Calu3 (cell line): ENCODE measurements at regions of chr10 and their contacts with region 1.

Region 1: DNA sequence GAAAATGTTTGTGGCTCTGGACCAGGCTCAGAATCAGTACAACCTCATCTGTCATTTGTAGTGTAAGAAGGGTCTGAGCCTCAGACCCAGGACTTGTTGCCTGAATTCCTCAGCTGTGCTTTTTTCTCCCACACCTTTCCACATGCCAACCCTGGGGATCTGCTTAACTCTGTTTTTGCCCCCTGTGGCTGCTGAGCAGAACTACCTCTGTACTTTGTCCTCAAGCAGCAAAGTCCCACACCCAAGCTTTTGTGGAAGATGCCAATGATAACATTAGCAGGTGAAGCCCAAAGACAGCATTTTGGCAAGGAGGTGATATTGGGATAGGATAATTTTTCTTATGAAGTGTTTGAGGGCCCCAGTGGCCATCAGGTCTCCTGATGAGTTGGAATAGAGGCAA is 5.8 kb upstream of the CYP2C18 start:
- DNase-seq: peak; percentile 25
- H3K4me3 Mint-ChIP-seq: no peak overlapping the region
- H3K27ac Mint-ChIP-seq: no peak overlapping the region
- H3K4me1 Mint-ChIP-seq: peaks cover 52% of the 10 kb centered on the region
- H3K27me3 Mint-ChIP-seq: no peaks in the 10 kb centered on the region
- CTCF ChIP-seq: no peak

Region 2: GRCh38 chr10:94076321-94076841 is 601.3 kb before region 1 on chr10:
- CTCF ChIA-PET with region 1: no interaction called
- intact Hi-C with region 1: no loop called
- DNase-seq: no peak
- H3K4me3 Mint-ChIP-seq: no peak overlapping the region
- H3K27ac Mint-ChIP-seq: no peak overlapping the region
- H3K4me1 Mint-ChIP-seq: no peaks in the 10 kb centered on the region
- H3K27me3 Mint-ChIP-seq: peaks cover 19% of the 10 kb centered on the region
- CTCF ChIP-seq: no peak

Region 3: DNA sequence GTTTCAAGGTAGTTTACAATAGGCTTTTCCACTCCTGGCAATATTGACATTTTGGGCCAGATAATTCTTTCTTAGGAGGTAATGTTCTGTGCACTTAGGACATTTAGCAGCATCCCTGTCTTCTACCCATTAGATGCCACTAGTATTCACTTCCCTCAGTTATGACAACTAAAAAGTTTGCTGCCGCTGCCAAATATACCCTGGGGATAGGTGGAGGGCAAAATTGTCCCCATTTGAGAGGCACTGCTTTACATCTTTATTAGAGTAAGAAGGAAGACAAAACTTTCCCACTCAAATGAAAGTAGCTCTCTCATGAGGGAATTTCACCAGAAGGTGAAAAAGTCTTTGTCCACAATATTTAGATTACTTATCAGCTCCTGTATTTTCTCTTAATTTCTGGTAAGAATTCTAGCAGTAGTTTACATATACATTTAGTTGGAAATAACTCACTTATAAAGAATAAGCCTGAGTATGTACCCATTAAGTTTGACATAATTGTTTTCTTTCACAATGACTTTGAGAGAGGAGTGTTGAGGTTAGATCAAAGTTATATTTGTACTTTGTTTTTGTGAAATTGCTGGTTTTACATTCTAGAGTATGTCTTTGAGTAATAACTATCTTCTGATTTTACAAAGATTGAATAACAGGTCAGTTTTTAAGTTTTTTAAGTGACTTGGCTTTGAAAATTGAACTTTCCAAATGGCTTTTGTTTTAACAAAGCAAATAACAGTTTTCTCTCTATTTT is 86.1 kb before region 1 on chr10:
- CTCF ChIA-PET with region 1: no interaction called
- intact Hi-C with region 1: no loop called
- DNase-seq: no peak
- H3K4me3 Mint-ChIP-seq: no peak overlapping the region
- H3K27ac Mint-ChIP-seq: no peak overlapping the region
- H3K4me1 Mint-ChIP-seq: no peaks in the 10 kb centered on the region
- H3K27me3 Mint-ChIP-seq: no peaks in the 10 kb centered on the region
- CTCF ChIP-seq: no peak

Region 4: DNA sequence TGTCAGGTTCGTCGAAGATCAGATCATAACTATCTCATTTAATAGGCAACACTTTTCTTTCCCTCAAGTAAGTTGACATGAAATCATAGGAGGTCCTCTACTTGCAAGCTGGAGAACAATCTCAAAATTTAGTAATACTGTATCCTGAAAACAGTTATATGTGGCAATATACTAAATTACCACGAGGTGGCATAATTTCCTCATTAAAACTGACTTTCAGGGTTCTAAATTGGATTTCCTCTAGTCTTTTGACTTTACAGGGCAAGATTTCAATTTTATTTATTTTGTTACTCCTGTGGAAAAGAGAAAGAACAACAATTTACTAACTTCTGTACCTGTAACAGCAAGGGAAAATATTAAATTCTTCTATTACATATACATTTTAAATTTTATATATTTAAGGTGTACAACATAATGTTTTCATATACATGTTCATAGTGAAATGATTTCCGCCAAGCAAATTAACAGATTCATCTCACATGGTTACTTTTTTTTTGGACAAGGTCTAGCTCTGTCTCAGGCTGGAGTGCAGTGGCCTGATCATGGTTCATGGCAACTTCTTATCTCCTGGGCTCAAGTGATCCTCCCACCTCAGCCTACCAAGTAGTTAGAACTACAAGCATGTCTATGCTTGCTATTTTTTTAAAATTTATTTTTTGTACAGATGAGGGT is 47.5 kb before region 1 on chr10:
- CTCF ChIA-PET with region 1: no interaction called
- intact Hi-C with region 1: loop called (anchors 5 kb)
- DNase-seq: no peak
- H3K4me3 Mint-ChIP-seq: no peak overlapping the region
- H3K27ac Mint-ChIP-seq: no peak overlapping the region
- H3K4me1 Mint-ChIP-seq: no peaks in the 10 kb centered on the region
- H3K27me3 Mint-ChIP-seq: no peaks in the 10 kb centered on the region
- CTCF ChIP-seq: no peak

Region 5: GRCh38 chr10:94747838-94748237 is 70.1 kb after region 1 on chr10:
- CTCF ChIA-PET with region 1: no interaction called
- intact Hi-C with region 1: loop called (anchors 5 kb)
- DNase-seq: peak; percentile 2
- H3K4me3 Mint-ChIP-seq: no peak overlapping the region
- H3K27ac Mint-ChIP-seq: peak overlapping the region; percentile 70
- H3K4me1 Mint-ChIP-seq: peaks cover 41% of the 10 kb centered on the region
- H3K27me3 Mint-ChIP-seq: no peaks in the 10 kb centered on the region
- CTCF ChIP-seq: no peak